Stomach (tissue), 19 donors: ENCODE measurements at regions of chr12 and their contacts with region 1.

Region 1: GRCh38 chr12:42023733-42024494 is 120.8 kb downstream of the GXYLT1 start:
- DNase-seq: peak; percentile 73 to 93
- H3K4me3 ChIP-seq: peak overlapping the region; percentile 37 to 43 (median 39)
- H3K27ac ChIP-seq: no peak overlapping the region
- H3K4me1 ChIP-seq: peaks cover 0 to 9% (median 3%) of the 10 kb centered on the region in 4 donors
- H3K27me3 ChIP-seq: no peaks in the 10 kb centered on the region
- CTCF ChIP-seq: peak in 5 of 7 experiments; percentile 75 to 94 (median 85)
- EP300 ChIP-seq: no peak
- POLR2A ChIP-seq: no peak

Region 2: DNA sequence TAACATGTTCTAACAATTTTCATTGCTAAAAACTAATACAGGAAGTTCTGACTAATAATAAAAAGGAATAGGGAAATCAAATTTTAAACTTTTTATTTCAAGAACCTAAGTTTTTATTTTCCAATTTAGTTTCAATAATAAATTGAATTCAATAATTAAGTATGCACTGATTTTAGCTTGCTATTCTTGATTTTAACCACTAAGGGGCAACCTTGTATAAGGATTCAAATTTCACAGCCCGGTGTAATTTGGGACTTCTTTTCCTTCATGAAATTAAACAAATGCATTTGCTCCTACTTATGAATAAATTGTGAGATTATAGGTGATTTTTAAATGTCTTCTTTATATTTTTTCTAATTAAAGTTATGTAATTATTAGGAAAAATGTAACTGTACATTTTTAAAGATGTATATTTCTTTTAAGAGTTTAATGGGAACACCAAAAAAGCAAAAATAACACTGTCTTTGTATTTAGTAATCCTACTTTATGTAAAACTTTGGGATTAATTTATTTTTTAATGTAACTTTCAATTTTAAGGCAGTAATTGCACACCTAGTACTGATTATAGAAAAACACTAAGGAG is 1077.2 kb before region 1 on chr12:
- intact Hi-C with region 1: loop called (anchors 5 kb)
- DNase-seq: peak in 1 of 2 donors; percentile 54
- H3K4me3 ChIP-seq: no peak overlapping the region
- H3K27ac ChIP-seq: no peak overlapping the region
- H3K4me1 ChIP-seq: no peaks in the 10 kb centered on the region
- H3K27me3 ChIP-seq: no peaks in the 10 kb centered on the region
- CTCF ChIP-seq: peak in 5 of 7 experiments; percentile 44 to 72 (median 48)
- EP300 ChIP-seq: no peak
- POLR2A ChIP-seq: no peak

Region 3: GRCh38 chr12:41277116-41277945 is 746.6 kb before region 1 on chr12:
- intact Hi-C with region 1: loop called (anchors 5 kb)
- DNase-seq: peak in 1 of 2 donors; percentile 70
- H3K4me3 ChIP-seq: no peak overlapping the region
- H3K27ac ChIP-seq: no peak overlapping the region
- H3K4me1 ChIP-seq: peaks cover 0 to 17% (median 6%) of the 10 kb centered on the region in 4 donors
- H3K27me3 ChIP-seq: no peaks in the 10 kb centered on the region
- CTCF ChIP-seq: peak in 4 of 7 experiments; percentile 29 to 54 (median 46)
- EP300 ChIP-seq: no peak
- POLR2A ChIP-seq: no peak

Region 4: GRCh38 chr12:41684997-41685396 is 338.9 kb before region 1 on chr12:
- intact Hi-C with region 1: loop called (anchors 5 kb)
- DNase-seq: no peak
- H3K4me3 ChIP-seq: no peak overlapping the region
- H3K27ac ChIP-seq: no peak overlapping the region
- H3K4me1 ChIP-seq: no peaks in the 10 kb centered on the region
- H3K27me3 ChIP-seq: no peaks in the 10 kb centered on the region
- CTCF ChIP-seq: peak in 2 of 7 experiments; percentile 40 to 47
- EP300 ChIP-seq: no peak
- POLR2A ChIP-seq: no peak